ENCODE measurements at regions of chr1 and their contacts with region 1.

Region 1: DNA sequence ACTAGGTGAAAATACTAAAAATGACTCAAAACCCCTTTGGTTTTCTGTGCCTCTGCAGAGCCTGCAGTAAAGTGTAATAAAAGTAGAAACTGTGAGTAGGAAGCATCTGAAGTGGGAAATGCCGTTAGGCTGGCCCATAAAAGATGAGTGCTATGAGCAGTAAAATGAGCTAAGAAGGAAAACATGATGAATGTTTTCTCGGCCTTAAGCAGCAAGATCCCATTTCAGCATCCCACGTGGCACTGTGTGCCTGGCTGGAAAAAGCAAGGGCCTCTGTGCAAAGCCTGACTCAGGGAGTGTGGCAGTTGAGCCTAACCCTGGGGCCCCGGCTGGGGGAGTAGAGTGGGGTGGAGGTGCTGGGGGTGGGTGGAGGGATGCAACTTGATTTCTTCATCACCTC is 109.5 kb downstream of the TBX15 start:
- DNase-seq: no peak
- ATAC-seq: peak; percentile 17 to 38
- H3K4me3 ChIP-seq: no peak overlapping the region
- H3K27ac ChIP-seq: no peak overlapping the region
- H3K4me1 ChIP-seq: peaks cover 21 to 22% of the 10 kb centered on the region in 2 donors
- H3K27me3 ChIP-seq: no peaks in the 10 kb centered on the region
- CTCF ChIP-seq: no peak
- POLR2A ChIP-seq: no peak

Region 2: DNA sequence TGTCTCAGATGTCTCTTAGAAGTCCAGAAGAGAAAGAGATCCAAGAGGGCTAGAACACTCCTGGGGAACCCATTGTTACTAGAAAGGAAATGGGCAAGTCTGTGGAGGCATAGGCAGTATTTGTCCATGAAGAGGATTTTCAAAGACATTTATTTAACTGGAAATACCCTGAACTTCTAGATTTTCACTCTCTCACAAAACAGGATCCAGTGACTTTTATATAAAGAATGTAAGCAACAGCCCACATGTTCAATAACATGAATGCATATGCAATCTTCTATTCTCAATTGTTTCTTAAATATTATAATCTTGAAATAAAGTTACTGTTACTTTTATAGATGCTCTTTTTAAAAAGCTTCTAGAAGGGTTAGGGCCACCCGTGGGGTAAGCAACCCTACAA is 56.0 kb after region 1 on chr1:
- in situ Hi-C with region 1: no loop called
- intact Hi-C with region 1: loop called (anchors 5 kb)
- DNase-seq: no peak
- ATAC-seq: no peak
- H3K4me3 ChIP-seq: no peak overlapping the region
- H3K27ac ChIP-seq: peak overlapping the region; percentile 40 to 83 (median 46)
- H3K4me1 ChIP-seq: peaks cover 56 to 71% of the 10 kb centered on the region in 2 donors
- H3K27me3 ChIP-seq: no peaks in the 10 kb centered on the region
- CTCF ChIP-seq: no peak
- POLR2A ChIP-seq: no peak

Measured in gastrocnemius medialis (tissue), 4 donors.